ENCODE measurements at regions of chr3 and their contacts with region 1.

Region 1: DNA sequence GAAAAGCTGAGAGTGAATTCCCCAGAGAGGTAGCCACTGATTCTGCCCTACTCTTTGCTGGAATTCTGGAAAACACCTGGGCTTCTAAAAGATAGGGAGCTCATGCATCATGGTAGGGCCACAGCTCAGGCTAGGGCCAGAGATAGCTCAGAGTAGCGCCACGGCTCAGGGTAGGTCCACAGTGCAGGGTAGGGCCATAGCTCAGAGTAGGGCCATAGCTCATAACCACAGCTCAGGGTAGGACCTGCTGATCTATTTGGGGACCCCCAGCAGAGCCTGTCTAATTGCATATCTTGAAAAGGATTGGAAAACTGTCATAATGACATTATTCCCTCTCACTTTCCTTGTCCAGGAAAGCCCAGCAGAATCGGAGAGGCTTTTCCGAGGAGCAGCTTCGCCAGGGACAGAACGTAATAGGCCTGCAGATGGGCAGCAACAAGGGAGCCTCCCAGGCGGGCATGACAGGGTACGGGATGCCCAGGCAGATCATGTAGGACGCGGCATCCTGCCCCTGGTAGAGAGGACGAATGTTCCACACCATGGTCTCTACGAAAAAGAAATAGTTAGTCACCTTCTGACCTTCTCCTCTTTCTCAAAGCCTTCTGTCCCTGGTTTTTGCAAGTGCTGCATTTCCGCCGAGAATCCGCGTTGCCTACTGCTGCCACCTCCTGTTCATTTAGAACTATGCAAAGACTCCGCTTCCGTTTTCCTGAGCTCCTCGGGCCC is 14.5 kb downstream of the TAGLN3 start:
- DNase-seq: peak; percentile 62
- H3K4me3 Mint-ChIP-seq: no peak overlapping the region
- H3K27ac Mint-ChIP-seq: no peak overlapping the region
- H3K4me1 Mint-ChIP-seq: no peaks in the 10 kb centered on the region
- H3K27me3 Mint-ChIP-seq: no peaks in the 10 kb centered on the region
- CTCF ChIP-seq: peak; percentile 26

Region 2: DNA sequence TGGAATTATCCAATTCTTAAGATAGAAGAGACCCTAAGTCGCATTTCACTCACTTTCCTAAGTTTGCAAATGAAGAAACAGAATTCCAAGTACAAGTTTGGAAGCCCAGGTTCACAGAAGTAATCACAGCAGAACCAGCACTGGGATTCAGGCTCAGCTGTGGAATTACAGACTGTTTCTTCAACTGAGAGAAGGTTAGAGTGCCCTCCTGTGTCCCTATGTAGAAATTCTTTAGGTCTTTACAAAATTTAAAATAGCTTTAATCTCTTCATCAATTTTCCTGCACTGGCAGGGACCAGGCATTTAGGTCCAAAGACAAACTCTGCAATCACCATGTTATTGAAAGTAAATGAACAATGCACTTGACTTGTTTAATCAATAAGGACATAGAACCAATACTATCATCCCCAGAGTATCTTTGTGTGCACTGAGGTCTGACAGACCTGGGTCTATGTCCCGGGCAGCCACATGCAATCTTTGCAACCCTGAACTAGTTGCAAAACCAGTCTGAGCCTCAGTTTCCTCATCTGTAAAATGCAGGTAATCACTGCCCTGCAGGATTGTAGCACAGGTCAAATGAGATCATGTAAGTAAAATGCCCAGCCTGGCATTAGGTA is 321.8 kb before region 1 on chr3:
- CTCF ChIA-PET with region 1: no interaction called
- intact Hi-C with region 1: no loop called
- DNase-seq: no peak
- H3K4me3 Mint-ChIP-seq: no peak overlapping the region
- H3K27ac Mint-ChIP-seq: no peak overlapping the region
- H3K4me1 Mint-ChIP-seq: peaks cover 9% of the 10 kb centered on the region
- H3K27me3 Mint-ChIP-seq: no peaks in the 10 kb centered on the region
- CTCF ChIP-seq: no peak

Region 3: DNA sequence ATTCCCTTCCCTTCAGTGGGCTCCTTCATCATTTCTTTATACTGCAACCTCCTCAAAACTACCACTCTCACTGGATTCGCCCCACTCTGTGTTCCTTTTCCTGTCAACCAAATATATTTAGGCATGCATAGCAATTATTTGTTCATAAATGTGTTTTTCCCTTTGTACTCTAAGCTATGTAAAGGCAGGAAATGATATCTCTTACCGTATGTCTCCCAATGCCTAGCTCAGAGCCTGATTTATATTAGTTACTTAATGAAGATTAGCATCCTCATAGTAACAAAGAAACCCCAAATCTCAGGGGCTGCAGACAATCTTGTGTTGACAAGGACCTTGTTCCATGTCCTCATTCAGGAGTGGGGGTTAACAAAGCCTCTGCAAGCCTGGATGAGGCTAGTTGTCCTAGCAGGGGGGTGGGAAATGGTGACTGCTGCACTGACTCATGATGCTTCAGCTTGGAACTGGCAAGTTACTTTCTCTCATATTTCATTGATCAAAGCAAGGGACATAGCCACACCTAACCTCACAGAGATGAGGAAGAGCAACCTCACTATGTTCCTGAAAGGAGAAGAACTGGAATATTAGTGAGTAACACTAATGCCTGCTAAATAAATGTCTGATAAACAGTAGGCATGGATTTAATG is 138.9 kb before region 1 on chr3:
- CTCF ChIA-PET with region 1: no interaction called
- intact Hi-C with region 1: no loop called
- DNase-seq: no peak
- H3K4me3 Mint-ChIP-seq: no peak overlapping the region
- H3K27ac Mint-ChIP-seq: no peak overlapping the region
- H3K4me1 Mint-ChIP-seq: peaks cover 20% of the 10 kb centered on the region
- H3K27me3 Mint-ChIP-seq: no peaks in the 10 kb centered on the region
- CTCF ChIP-seq: no peak

Region 4: GRCh38 chr3:111978493-111979433 is 34.5 kb before region 1 on chr3 and contains the start of gene ABHD10:
- CTCF ChIA-PET with region 1: interaction called, 12 read pairs
- intact Hi-C with region 1: no loop called
- DNase-seq: peak; percentile 89
- H3K4me3 Mint-ChIP-seq: peak within 1 kb of the TSS; percentile 84
- H3K27ac Mint-ChIP-seq: peak within 1 kb of the TSS; percentile 70
- H3K4me1 Mint-ChIP-seq: no peaks in the 10 kb centered on the region
- H3K27me3 Mint-ChIP-seq: no peaks in the 10 kb centered on the region
- CTCF ChIP-seq: no peak
- total RNA-seq, gene ABHD10: 23.7 and 26.4 TPM in 2 replicates

Region 5: DNA sequence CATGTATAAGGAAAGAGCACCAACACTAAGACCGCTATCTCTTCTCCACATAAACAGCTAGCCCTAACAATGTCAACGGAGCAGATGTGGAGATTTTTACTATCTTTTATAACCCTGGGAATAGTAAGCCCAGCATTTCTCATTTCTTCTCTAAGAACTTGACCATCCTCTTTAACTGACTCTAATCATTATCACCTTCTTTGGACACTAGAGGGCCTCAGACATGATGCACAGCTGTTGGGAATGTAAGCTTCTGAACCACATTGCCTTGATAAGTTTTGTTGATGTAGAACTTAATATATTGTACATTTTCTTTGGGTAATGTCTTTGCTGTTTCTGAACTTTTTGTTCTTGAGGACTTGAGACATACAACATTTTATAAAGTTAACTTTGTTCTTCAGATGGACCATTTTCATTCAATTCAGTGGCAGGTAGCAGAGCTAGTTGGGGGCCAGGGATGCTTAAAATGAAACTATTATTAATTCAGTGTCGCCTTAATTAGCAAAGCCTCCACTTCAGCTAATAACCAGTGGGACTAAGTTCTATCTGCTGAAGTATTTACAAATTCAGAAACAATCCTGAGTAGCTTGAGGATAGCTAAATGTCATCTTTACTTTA is 24.1 kb before region 1 on chr3:
- CTCF ChIA-PET with region 1: interaction called, 33 read pairs
- intact Hi-C with region 1: no loop called
- DNase-seq: peak; percentile 16
- H3K4me3 Mint-ChIP-seq: no peak overlapping the region
- H3K27ac Mint-ChIP-seq: no peak overlapping the region
- H3K4me1 Mint-ChIP-seq: no peaks in the 10 kb centered on the region
- H3K27me3 Mint-ChIP-seq: no peaks in the 10 kb centered on the region
- CTCF ChIP-seq: peak; percentile 27